Activated CD4-positive, alpha-beta memory T cell treated with anti-CD3 and anti-CD28 coated beads for 36 hours (primary cell): ENCODE measurements at regions of chr12 and their contacts with region 1.

Region 1: GRCh38 chr12:112012775-112013600 is at the starts of genes ERP29 and TMEM116:
- DNase-seq: peak; percentile 100
- H3K4me3 Mint-ChIP-seq: peak within 1 kb of the TSS; percentile 97
- H3K27ac Mint-ChIP-seq: peak within 1 kb of the TSS; percentile 99
- H3K4me1 Mint-ChIP-seq: peaks cover 49% of the 10 kb centered on the region
- H3K27me3 Mint-ChIP-seq: no peaks in the 10 kb centered on the region
- total RNA-seq, gene ERP29: 102 to 104 TPM
- total RNA-seq, gene TMEM116: 14.0 to 17.1 TPM

Region 2: GRCh38 chr12:111599459-111600204 is 413.4 kb before region 1 on chr12:
- CTCF ChIA-PET with region 1: no interaction called
- POLR2A ChIA-PET with region 1: no interaction called
- intact Hi-C with region 1: loop called (anchors 10 kb)
- DNase-seq: peak; percentile 89
- H3K4me3 Mint-ChIP-seq: peak overlapping the region; percentile 85
- H3K27ac Mint-ChIP-seq: peak overlapping the region; percentile 89
- H3K4me1 Mint-ChIP-seq: peaks cover 26% of the 10 kb centered on the region
- H3K27me3 Mint-ChIP-seq: no peaks in the 10 kb centered on the region

Region 3: GRCh38 chr12:111942557-111942956 is 70.4 kb before region 1 on chr12:
- CTCF ChIA-PET with region 1: interaction called, 35 read pairs
- POLR2A ChIA-PET with region 1: interaction called, 3 read pairs
- intact Hi-C with region 1: loop called (anchors 1 kb)
- DNase-seq: no peak
- H3K4me3 Mint-ChIP-seq: no peak overlapping the region
- H3K27ac Mint-ChIP-seq: peak overlapping the region; percentile 64
- H3K4me1 Mint-ChIP-seq: peaks cover 22% of the 10 kb centered on the region
- H3K27me3 Mint-ChIP-seq: no peaks in the 10 kb centered on the region

Region 4: DNA sequence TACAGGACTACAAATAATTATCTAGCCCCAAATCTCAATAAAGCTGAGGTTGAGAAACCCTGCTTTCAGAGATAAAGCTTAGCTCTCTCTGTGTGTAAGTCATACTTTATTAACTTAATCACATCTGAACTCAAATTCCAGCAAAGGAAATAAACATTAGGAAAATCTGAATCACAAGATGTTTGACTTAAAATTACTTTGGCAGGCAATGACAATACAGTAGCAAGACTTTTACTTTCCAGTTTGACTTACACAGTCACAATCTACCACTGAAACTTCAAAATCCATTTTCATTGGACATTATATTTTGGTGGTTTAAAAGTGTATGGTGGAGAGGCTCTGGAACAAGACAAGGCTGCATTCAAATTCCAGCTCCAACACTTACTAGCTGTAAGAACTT is 11.4 kb before region 1 on chr12:
- CTCF ChIA-PET with region 1: interaction called, 26 read pairs
- POLR2A ChIA-PET with region 1: interaction called, 44 read pairs
- intact Hi-C with region 1: loop called (anchors 1 kb)
- DNase-seq: no peak
- H3K4me3 Mint-ChIP-seq: peak overlapping the region; percentile 54
- H3K27ac Mint-ChIP-seq: peak overlapping the region; percentile 71
- H3K4me1 Mint-ChIP-seq: peaks cover 67% of the 10 kb centered on the region
- H3K27me3 Mint-ChIP-seq: no peaks in the 10 kb centered on the region

Region 5: DNA sequence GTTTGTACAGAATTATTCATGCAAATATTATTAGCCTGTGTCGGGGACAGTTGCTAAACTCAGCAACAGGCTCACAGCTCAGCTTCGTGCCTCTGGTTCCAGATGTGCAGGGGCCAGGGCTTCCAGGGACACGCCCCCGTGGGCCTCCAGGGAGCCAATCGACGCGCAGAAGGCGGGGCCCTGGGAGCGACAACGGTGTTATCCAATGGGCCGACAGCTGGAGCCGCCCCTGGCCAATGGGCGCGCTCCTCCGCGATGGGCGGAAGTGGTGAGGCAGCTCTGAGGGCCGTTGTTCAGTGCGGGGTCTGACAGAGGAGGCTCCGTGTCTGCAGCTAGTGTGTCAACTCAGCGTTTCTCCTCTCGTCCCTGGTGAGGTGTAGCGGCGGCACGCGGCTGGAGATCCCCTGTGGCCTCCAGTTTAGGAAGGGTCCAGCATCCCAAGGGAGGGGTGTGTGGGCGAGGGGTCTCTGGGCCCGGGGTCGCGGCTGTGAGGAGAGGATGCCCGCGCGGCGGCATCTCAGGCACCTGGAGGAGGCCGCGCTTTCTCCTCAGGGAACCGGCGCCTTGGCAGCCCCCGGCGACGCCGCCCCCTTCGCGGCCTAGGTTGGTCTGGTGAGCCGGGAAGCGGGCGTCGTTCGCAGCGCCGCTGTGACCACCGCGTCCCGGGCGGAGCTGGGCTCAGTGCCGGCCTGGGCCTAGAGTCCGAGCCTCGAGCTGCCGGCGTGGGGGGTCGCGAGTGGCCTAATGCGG is 112.4 kb after region 1 on chr12 and contains the start of gene TRAFD1:
- CTCF ChIA-PET with region 1: interaction called, 4 read pairs
- POLR2A ChIA-PET with region 1: interaction called, 17 read pairs
- intact Hi-C with region 1: loop called (anchors 1 kb)
- DNase-seq: peak; percentile 99
- H3K4me3 Mint-ChIP-seq: peak within 1 kb of the TSS; percentile 87
- H3K27ac Mint-ChIP-seq: peak within 1 kb of the TSS; percentile 87
- H3K4me1 Mint-ChIP-seq: peaks cover 36% of the 10 kb centered on the region
- H3K27me3 Mint-ChIP-seq: peaks cover 1% of the 10 kb centered on the region
- total RNA-seq, gene TRAFD1: 56.4 to 61.8 TPM

Region 6: GRCh38 chr12:112303004-112303403 is 290.0 kb after region 1 on chr12:
- CTCF ChIA-PET with region 1: no interaction called
- POLR2A ChIA-PET with region 1: no interaction called
- intact Hi-C with region 1: loop called (anchors 5 kb)
- DNase-seq: peak; percentile 77
- H3K4me3 Mint-ChIP-seq: no peak overlapping the region
- H3K27ac Mint-ChIP-seq: peak overlapping the region; percentile 82
- H3K4me1 Mint-ChIP-seq: peaks cover 8% of the 10 kb centered on the region
- H3K27me3 Mint-ChIP-seq: no peaks in the 10 kb centered on the region

Region 7: GRCh38 chr12:112409064-112409905 is 396.3 kb after region 1 on chr12 and contains the start of gene RPL6:
- CTCF ChIA-PET with region 1: no interaction called
- POLR2A ChIA-PET with region 1: no interaction called
- intact Hi-C with region 1: loop called (anchors 1 kb)
- DNase-seq: peak; percentile 86
- H3K4me3 Mint-ChIP-seq: peak within 1 kb of the TSS; percentile 100
- H3K27ac Mint-ChIP-seq: peak within 1 kb of the TSS; percentile 100
- H3K4me1 Mint-ChIP-seq: peaks cover 37% of the 10 kb centered on the region
- H3K27me3 Mint-ChIP-seq: no peaks in the 10 kb centered on the region
- total RNA-seq, gene RPL6: 1,833 TPM